ENCODE measurements at regions of chr2 and their contacts with region 1.

Region 1: GRCh38 chr2:35503715-35504180 is 851.8 kb upstream of the CRIM1 start:
- DNase-seq: no peak
- ATAC-seq: no peak
- H3K4me3 ChIP-seq: no peak overlapping the region
- H3K27ac ChIP-seq: no peak overlapping the region
- H3K4me1 ChIP-seq: no peaks in the 10 kb centered on the region
- H3K27me3 ChIP-seq: no peaks in the 10 kb centered on the region
- CTCF ChIP-seq: no peak

Region 2: DNA sequence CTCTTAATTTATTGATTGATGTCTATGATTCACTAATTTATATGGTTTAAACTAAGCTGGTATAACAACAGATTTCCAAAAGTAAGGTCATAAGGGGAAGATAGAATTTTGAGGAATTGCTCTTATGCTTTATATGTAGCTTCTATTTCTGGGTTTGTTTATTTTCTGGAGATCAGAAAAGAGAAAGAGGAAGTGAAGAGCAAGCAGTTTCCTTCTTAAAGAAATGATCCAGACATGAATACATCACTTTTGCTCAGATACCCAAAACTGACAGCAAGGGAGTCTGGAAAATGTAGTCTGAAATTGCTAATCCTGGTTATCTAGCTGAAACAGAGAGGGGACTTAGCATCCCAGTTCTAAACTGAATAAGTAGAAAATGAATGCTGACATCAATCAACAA is 60.7 kb before region 1 on chr2:
- CTCF ChIA-PET with region 1: no interaction called
- POLR2A ChIA-PET with region 1: interaction called, 15 read pairs
- in situ Hi-C with region 1: no loop called
- intact Hi-C with region 1: no loop called
- DNase-seq: no peak
- ATAC-seq: no peak
- H3K4me3 ChIP-seq: no peak overlapping the region
- H3K27ac ChIP-seq: no peak overlapping the region
- H3K4me1 ChIP-seq: no peaks in the 10 kb centered on the region
- H3K27me3 ChIP-seq: no peaks in the 10 kb centered on the region
- CTCF ChIP-seq: no peak

Region 3: DNA sequence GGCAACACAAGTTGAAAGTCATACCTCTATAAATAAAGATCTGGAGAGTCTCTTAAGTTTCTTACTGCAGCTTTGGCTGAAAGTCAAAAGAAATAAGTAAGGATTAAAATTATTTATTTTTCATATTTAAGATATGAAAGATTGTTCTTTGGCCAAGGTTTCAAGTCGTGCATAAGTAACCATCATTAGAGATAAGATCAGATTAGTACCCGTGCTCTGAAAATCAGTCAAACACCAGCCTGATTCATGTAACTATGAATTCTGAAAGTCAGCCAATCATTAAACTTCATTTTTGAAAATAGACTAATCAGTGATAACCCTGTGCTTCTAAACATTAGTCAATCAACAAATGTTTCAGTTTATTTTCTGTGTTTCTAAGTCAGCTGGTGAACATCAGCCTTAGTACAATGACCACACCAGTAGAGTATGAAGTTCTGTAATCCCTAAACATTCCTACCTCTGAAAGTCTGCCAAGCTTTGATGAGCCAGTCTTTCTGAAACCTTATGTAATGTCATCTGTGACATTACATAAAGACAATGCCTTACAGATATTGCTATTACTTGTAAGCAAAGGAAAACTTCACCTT is 44.3 kb after region 1 on chr2:
- CTCF ChIA-PET with region 1: no interaction called
- POLR2A ChIA-PET with region 1: no interaction called
- in situ Hi-C with region 1: no loop called
- intact Hi-C with region 1: no loop called
- DNase-seq: no peak
- ATAC-seq: no peak
- H3K4me3 ChIP-seq: no peak overlapping the region
- H3K27ac ChIP-seq: no peak overlapping the region
- H3K4me1 ChIP-seq: no peaks in the 10 kb centered on the region
- H3K27me3 ChIP-seq: no peaks in the 10 kb centered on the region
- CTCF ChIP-seq: no peak

Measured in Panc1 (cell line).